ENCODE measurements at regions of chr15 and their contacts with region 1.

Region 1: DNA sequence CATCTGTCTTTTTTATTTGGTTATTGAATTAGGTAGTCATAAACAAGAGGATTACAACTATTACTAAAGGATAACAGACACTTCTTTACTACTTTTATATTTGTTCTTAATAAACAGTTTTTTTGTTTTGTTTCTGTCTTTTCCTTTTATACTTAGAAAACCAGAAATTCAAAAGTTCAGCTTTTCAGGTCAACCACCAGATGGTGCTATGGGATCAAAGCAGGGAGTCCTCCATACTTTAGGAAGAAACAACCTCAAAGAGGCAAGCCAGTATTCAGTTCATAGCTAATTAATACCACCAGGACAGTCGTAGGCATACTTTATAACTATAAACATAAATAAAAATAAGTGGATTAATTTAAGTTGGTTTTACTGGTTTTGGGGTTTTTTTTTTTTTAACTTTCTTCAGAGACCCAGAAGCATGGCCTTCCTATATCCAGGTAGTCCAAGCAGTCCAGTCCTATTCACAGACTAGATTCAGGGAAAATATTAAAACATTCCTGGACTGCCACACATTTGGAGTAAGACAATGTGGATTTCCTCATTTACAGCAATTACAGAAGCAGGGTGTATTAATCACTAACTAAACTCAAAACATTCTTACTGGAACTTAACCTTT is 16.0 kb upstream of the EID1 start:
- DNase-seq: peak in 1 of 2 donors; percentile 25
- ATAC-seq: peak; percentile 60

Region 2: GRCh38 chr15:48777645-48778330 is 84.1 kb before region 1 on chr15:
- intact Hi-C with region 1: no loop called
- DNase-seq: no peak
- ATAC-seq: no peak

Region 3: GRCh38 chr15:49135893-49136292 is 274.0 kb after region 1 on chr15:
- intact Hi-C with region 1: loop called (anchors 10 kb)
- DNase-seq: no peak
- ATAC-seq: no peak

Region 4: GRCh38 chr15:49145651-49146609 is 284.0 kb after region 1 on chr15:
- intact Hi-C with region 1: loop called in 1 of 2 experiments (anchors 10 kb)
- DNase-seq: peak in 1 of 2 donors; percentile 13
- ATAC-seq: peak; percentile 44

Region 5: DNA sequence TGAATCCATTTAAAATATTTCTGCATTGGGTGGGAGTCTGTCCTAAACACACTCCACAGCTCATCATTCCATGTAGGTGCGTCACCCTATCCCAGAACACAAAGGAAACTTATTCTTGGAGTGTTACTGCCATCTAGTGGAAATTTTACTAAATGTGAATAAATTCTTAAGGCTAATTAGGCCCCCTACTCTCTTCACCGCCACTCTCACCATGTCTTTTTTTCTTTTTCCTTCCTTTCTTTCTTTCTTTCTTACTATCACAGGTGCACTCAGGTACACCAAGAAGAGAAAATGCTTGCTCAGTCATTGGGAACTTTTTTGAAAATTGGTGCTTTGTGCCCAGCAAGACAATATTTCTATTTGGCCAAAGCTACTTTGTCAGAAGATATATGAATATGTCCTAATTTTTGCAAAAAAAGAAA is 1283.5 kb after region 1 on chr15:
- intact Hi-C with region 1: loop called in 1 of 2 experiments (anchors 10 kb)
- DNase-seq: no peak
- ATAC-seq: peak; percentile 55